Activated CD4-positive, alpha-beta T cell treated with anti-CD3 and anti-CD28 coated beads, Interleukin-2, amount 10 ng/mL, durations not matched to agents 24 days and 14 days (primary cell): ENCODE measurements at regions of chr13 and their contacts with region 1.

Region 1: DNA sequence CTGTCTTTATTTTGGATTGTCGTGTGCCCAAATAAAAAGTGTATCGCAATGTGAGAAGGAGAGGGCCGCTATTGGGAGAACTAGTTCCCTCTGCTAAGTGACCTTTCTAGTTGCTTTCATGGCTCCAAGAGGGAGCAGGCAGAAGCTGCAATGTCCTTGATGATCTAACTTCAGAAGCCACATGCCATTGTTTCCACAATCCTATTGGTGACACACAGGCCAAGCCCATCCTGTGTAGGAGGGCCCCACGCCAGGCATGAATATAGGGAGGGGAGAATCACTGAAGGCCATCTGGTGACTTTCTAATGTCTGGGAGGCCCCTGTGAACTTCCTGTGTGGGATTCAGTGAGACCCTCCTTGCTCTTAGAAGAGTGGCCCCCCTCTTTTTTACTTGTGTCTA is 47.8 kb upstream of the KPNA3 start:
- DNase-seq: no peak
- H3K4me3 Mint-ChIP-seq: no peak overlapping the region
- H3K27ac Mint-ChIP-seq: no peak overlapping the region
- H3K4me1 Mint-ChIP-seq: no peaks in the 10 kb centered on the region
- H3K27me3 Mint-ChIP-seq: no peaks in the 10 kb centered on the region

Region 2: GRCh38 chr13:49652355-49653305 is 187.6 kb before region 1 on chr13:
- intact Hi-C with region 1: loop called (anchors 5 kb)
- DNase-seq: peak; percentile 70
- H3K4me3 Mint-ChIP-seq: no peak overlapping the region
- H3K27ac Mint-ChIP-seq: no peak overlapping the region
- H3K4me1 Mint-ChIP-seq: peaks cover 4% of the 10 kb centered on the region
- H3K27me3 Mint-ChIP-seq: no peaks in the 10 kb centered on the region

Region 3: GRCh38 chr13:49776871-49777270 is 63.4 kb before region 1 on chr13:
- intact Hi-C with region 1: no loop called
- DNase-seq: no peak
- H3K4me3 Mint-ChIP-seq: no peak overlapping the region
- H3K27ac Mint-ChIP-seq: no peak overlapping the region
- H3K4me1 Mint-ChIP-seq: peaks cover 18% of the 10 kb centered on the region
- H3K27me3 Mint-ChIP-seq: no peaks in the 10 kb centered on the region